ENCODE measurements at regions of chr7 and their contacts with region 1.

Region 1: DNA sequence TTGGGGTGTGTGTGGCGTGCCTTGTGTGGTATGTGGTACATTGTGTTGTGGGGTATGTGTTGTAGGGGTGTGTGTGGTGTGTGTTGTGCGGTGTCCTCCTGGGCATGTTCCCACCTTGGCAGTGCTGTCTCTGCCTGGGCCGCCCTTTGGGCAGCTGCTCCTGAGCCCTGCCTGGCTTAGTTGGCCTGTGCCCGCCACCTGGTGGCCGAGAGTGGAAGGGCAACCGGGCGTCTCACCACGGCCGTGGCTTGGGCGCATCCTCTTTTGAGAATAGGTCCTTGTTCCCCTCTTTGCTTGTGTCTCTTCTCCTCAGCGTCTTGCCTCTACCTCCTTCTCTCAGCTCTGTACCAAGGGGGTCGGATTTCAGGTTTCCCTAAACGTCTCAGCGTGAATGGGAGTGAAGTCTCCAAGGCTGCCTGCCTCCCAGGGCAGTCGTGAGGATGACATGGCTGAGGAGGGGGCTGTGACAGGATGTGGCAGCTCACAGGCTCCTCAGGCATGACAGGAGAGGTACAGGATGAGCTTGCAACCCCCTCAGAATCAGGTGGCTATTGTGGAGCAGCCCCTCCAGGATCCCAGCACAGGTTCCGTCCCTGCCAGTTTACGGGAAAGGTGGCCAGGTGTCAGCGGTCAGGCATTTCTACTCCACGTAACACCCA is 98.4 kb upstream of the PODXL start:
- DNase-seq: peak; percentile 92
- H3K4me3 ChIP-seq: 0 out of 4 replicates have a peak overlapping the region, but pooled peaks of 1 of the 2 experiments have one; percentile 10
- H3K27ac ChIP-seq: peak overlapping the region in 1 of 2 experiments; percentile 9; a peak in 1 of 4 replicates
- H3K4me1 ChIP-seq: no peaks in the 10 kb centered on the region; a peak in 1 of 4 replicates
- H3K27me3 ChIP-seq: no peaks in the 10 kb centered on the region
- CTCF ChIP-seq: peak; percentile 98
- EP300 ChIP-seq: no peak
- RAD21 ChIP-seq: peak; percentile 98

Region 2: DNA sequence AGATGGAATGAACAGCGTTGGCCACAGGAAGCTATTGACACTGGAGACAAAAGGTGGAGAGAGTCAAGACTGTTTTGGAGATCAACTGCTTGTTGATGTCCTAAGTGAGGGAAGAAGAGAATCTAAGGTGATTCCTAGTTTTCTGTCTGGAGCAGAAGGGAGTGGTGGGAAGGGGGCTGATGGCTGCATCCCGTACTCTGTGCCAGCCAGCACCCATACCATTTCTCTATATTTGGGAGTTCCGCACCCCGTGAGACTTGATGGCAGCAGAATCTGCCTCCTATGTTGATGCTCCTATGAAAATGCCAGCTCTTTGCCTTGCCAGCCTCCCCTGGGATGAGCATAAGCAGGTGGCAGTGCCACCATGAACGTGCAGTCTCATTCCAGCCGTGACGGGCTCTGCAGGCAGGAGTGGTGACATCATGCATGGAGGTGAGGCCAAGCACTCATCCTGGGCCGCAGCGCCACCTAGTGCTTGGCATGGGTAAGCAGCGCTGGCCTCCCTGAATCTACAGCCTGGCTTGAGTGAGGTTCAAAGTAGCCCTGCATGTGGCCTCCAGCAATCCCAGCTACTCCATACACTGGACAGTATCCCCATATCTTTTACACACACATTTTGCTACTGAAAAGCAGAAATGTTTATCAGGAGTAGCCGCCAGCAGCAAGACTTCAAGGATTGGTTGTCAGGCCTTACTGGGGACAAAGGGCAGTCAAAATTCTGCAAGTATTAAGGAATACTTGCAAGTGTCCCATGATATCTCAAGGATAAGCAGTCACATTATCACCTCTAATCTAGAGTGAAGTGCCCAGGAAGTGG is 141.3 kb before region 1 on chr7:
- CTCF ChIA-PET with region 1: interaction called, 291 read pairs
- POLR2A ChIA-PET with region 1: interaction called, 3 read pairs
- DNase-seq: peak; percentile 92
- H3K4me3 ChIP-seq: peak overlapping the region in 1 of 2 experiments; percentile 21; a peak in 2 of 4 replicates
- H3K27ac ChIP-seq: peak overlapping the region; percentile 2 to 41; a peak in 2 of 4 replicates
- H3K4me1 ChIP-seq: peaks cover 4 to 7% of the 10 kb centered on the region in 2 experiments; a peak in 2 of 4 replicates
- H3K27me3 ChIP-seq: no peaks in the 10 kb centered on the region
- CTCF ChIP-seq: peak; percentile 100
- EP300 ChIP-seq: no peak
- RAD21 ChIP-seq: peak; percentile 89

Region 3: DNA sequence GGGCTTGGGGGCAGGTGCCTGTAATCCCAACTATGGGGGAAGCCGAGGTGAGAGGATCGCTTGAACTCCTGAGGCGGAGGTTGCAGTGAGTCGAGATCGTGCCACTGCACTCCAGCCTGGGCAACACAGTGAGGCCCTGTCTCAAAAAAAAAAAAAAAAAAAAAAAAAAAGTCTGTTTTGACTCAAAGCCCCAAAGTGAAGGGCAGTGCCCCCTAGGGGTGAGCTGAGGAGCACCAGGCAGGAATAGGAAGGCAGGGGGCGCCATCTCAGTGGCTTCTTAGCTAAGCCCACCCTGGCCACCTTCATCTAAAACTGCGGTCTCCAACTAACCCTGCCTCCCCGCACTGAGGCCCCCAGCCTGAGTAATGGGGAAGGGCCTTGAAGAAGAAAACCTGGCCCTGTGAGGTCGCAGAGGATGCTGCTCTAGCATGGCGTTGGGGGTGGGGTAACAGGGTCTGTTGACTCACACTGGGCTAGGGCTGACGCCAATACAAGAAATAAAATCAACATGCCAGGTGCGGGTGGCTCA is 108.2 kb before region 1 on chr7:
- CTCF ChIA-PET with region 1: interaction called, 160 read pairs
- POLR2A ChIA-PET with region 1: no interaction called
- DNase-seq: peak; percentile 84
- H3K4me3 ChIP-seq: no peak overlapping the region; a peak in 1 of 4 replicates
- H3K27ac ChIP-seq: peak overlapping the region in 1 of 2 experiments; percentile 3; a peak in 1 of 4 replicates
- H3K4me1 ChIP-seq: peaks cover 24 to 26% of the 10 kb centered on the region in 2 experiments
- H3K27me3 ChIP-seq: no peaks in the 10 kb centered on the region
- CTCF ChIP-seq: peak; percentile 99
- EP300 ChIP-seq: no peak
- RAD21 ChIP-seq: peak; percentile 58

Region 4: DNA sequence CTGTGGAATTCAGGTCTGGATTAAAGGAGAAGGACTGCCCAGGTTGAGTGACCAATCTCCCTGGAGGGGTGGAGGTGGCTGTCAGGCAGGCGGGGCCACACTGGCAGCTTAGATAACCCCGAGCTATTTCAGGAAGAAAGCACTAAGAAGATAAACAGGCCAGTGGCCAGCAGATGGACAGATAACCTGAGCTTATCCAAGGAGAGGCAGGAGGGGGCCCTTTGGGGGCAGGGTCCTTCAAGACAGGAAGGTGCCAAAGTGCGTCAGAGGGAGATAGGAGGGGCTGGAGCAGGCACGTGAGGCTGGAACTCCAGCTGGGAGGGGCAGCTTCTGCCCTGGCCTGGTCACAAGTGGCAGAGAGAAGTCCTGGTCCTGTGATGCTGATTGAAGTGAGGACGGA is 68.5 kb before region 1 on chr7:
- CTCF ChIA-PET with region 1: interaction called, 10 read pairs
- POLR2A ChIA-PET with region 1: no interaction called
- DNase-seq: no peak
- H3K4me3 ChIP-seq: no peak overlapping the region
- H3K27ac ChIP-seq: no peak overlapping the region
- H3K4me1 ChIP-seq: 0 out of 4 replicates have a peak, but pooled peaks cover 0 to 5% of the 10 kb centered on the region in 2 experiments
- H3K27me3 ChIP-seq: no peaks in the 10 kb centered on the region
- CTCF ChIP-seq: no peak
- EP300 ChIP-seq: no peak
- RAD21 ChIP-seq: no peak

Region 5: DNA sequence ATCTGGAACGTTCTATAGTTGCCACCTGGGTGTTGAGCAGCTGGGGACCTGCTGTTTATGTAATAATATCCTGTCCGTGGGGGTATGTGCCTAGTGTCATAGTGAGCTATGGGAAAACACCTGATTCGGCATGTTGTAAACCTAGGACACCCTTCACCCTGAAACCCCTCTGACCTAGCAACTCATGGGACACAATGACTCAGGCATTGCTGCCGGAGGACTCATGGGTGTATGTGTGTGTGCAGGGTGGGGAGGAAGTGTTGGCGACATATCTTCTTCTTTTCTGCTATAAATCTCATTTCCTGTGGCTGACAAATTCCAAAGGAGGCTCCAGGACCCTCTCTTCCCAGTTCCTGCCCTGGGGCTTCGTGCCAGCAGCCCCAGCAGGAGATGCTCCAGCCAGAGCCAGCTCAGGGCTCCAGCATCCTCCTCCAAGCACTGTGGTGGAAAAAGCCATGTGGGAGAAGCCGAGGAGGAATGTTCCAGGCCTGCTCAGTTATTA is 21.4 kb before region 1 on chr7:
- CTCF ChIA-PET with region 1: interaction called, 38 read pairs
- POLR2A ChIA-PET with region 1: no interaction called
- DNase-seq: no peak
- H3K4me3 ChIP-seq: no peak overlapping the region
- H3K27ac ChIP-seq: peak overlapping the region in 1 of 2 experiments; percentile 86; a peak in 3 of 4 replicates
- H3K4me1 ChIP-seq: peaks cover 7 to 33% of the 10 kb centered on the region in 2 experiments; a peak in 3 of 4 replicates
- H3K27me3 ChIP-seq: no peaks in the 10 kb centered on the region
- CTCF ChIP-seq: no peak
- EP300 ChIP-seq: peak in 1 of 2 experiments; percentile 84; a peak in 1 of 4 replicates
- RAD21 ChIP-seq: no peak

Measured in SK-N-SH (cell line).